Activated T-helper 1 cell treated with anti-CD3 and anti-CD28 coated beads, Interleukin-12 subunit alpha, Interleukin-12 subunit beta, Interleukin-2, Interleukin-4 antibody, amounts not matched to agents 30 ng/mL and 10 ng/mL and 1 ng/mL, durations not matched to agents 14 hours and 24 hours and 36 hours (primary cell): ENCODE measurements at regions of chr16 and their contacts with region 1.

Region 1: GRCh38 chr16:48244080-48244862 is at the start of gene LONP2:
- DNase-seq: peak; percentile 90
- H3K4me3 Mint-ChIP-seq: peak within 1 kb of the TSS; percentile 92
- H3K27ac Mint-ChIP-seq: peak within 1 kb of the TSS; percentile 93
- H3K4me1 Mint-ChIP-seq: peaks cover 27% of the 10 kb centered on the region
- H3K27me3 Mint-ChIP-seq: peaks cover 2% of the 10 kb centered on the region
- total RNA-seq, gene LONP2: 52.2 and 55.7 TPM in 2 replicates

Region 2: GRCh38 chr16:48385272-48386150 is 141.2 kb after region 1 on chr16 and contains the start of gene SIAH1:
- intact Hi-C with region 1: loop called (anchors 1 kb)
- DNase-seq: peak; percentile 85
- H3K4me3 Mint-ChIP-seq: peak within 1 kb of the TSS; percentile 97
- H3K27ac Mint-ChIP-seq: peak within 1 kb of the TSS; percentile 95
- H3K4me1 Mint-ChIP-seq: peaks cover 29% of the 10 kb centered on the region
- H3K27me3 Mint-ChIP-seq: peaks cover 3% of the 10 kb centered on the region
- total RNA-seq, gene SIAH1: 15.6 and 16.8 TPM in 2 replicates

Region 3: DNA sequence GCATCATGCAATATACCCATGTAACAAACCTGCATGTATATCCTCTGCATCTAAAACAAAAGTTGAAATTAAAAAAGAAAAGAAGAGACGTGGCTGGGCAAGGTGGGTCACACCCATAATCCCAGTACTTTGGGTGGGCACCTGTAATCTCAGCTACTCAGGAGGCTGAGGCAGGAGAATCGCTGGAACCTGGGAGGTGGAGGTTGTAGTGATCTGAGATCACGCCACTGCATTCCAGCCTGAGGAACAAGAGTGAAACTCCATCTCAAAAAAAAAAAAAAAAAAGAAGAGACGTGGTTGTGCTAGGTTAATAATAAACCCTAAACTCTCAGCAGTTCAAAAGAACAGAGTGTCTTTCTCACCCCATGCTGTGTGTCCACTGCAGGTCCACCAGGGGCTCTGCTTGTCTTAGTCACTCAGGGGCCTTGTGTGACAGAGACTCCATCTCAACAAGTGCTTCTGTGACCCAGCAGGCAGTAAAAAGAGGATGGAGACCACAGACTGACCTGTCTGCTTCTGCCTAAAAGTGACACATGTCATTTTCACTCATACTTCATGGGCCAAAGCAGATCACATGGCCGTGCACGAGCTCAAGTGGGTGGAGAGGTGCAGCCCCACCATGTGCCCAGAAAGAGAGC is 388.0 kb after region 1 on chr16:
- intact Hi-C with region 1: loop called (anchors 1 kb)
- DNase-seq: no peak
- H3K4me3 Mint-ChIP-seq: no peak overlapping the region
- H3K27ac Mint-ChIP-seq: no peak overlapping the region
- H3K4me1 Mint-ChIP-seq: peaks cover 11% of the 10 kb centered on the region
- H3K27me3 Mint-ChIP-seq: peaks cover 11% of the 10 kb centered on the region